Activated CD4-positive, alpha-beta memory T cell treated with anti-CD3 and anti-CD28 coated beads for 36 hours (primary cell): ENCODE measurements at regions of chr17 and their contacts with region 1.

Region 1: GRCh38 chr17:39621523-39622379 is 5.0 kb upstream of the PPP1R1B start:
- DNase-seq: peak; percentile 92
- H3K4me3 Mint-ChIP-seq: peak overlapping the region; percentile 76
- H3K27ac Mint-ChIP-seq: peak overlapping the region; percentile 97
- H3K4me1 Mint-ChIP-seq: peaks cover 23% of the 10 kb centered on the region
- H3K27me3 Mint-ChIP-seq: peaks cover 20% of the 10 kb centered on the region

Region 2: GRCh38 chr17:39547713-39548478 is 73.9 kb before region 1 on chr17:
- CTCF ChIA-PET with region 1: interaction called, 97 read pairs
- POLR2A ChIA-PET with region 1: no interaction called
- intact Hi-C with region 1: loop called (anchors 1 kb)
- DNase-seq: peak; percentile 83
- H3K4me3 Mint-ChIP-seq: no peak overlapping the region
- H3K27ac Mint-ChIP-seq: no peak overlapping the region
- H3K4me1 Mint-ChIP-seq: no peaks in the 10 kb centered on the region
- H3K27me3 Mint-ChIP-seq: no peaks in the 10 kb centered on the region

Region 3: DNA sequence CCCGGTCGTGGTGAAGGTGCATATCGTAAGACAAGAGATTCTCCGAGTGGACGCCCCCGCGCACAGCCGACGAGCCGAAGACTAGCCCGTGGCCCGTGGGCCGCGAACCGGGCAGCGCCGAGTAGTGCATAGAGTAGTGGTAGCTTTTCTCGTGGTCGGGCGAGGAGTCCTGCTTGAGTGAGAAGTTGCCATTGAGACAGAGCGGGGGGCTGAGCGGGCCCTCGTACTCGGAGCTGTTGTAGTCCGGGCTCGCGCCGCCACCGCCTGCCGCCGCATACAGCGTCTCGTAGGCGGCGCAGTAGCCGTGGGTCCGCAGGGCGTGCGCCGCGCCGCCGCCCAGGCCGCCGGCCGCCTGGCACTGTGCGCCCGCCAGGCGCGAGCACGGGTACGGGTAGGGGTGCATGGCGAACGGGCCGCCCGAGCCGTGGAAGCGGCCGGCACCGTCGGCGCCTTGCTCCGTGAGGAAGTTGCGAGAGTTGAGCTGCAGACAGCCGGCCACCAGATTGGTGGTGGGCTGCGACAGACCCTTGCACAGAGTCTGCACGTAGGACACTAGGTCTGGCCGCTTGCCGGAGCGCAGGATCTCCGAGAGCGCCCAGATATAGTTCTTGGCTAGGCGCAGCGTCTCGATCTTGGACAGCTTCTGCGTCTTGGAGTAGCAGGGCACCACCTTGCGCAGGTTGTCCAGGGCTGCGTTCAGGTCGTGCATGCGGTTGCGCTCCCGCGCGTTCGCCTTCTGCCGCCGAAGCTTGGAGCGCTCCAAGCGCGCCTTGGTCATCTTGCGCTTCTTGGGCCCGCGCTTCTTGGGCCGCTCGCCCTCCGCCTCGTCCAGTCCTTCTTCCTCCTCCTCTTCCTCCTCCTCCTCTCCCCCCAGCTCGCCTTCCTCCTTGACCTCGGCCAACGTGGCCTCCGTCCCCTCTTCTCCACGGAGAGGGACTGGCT is 16.0 kb before region 1 on chr17:
- CTCF ChIA-PET with region 1: interaction called, 56 read pairs
- POLR2A ChIA-PET with region 1: interaction called, 4 read pairs
- intact Hi-C with region 1: no loop called
- DNase-seq: no peak
- H3K4me3 Mint-ChIP-seq: no peak overlapping the region
- H3K27ac Mint-ChIP-seq: no peak overlapping the region
- H3K4me1 Mint-ChIP-seq: peaks cover 17% of the 10 kb centered on the region
- H3K27me3 Mint-ChIP-seq: peaks cover 67% of the 10 kb centered on the region

Region 4: DNA sequence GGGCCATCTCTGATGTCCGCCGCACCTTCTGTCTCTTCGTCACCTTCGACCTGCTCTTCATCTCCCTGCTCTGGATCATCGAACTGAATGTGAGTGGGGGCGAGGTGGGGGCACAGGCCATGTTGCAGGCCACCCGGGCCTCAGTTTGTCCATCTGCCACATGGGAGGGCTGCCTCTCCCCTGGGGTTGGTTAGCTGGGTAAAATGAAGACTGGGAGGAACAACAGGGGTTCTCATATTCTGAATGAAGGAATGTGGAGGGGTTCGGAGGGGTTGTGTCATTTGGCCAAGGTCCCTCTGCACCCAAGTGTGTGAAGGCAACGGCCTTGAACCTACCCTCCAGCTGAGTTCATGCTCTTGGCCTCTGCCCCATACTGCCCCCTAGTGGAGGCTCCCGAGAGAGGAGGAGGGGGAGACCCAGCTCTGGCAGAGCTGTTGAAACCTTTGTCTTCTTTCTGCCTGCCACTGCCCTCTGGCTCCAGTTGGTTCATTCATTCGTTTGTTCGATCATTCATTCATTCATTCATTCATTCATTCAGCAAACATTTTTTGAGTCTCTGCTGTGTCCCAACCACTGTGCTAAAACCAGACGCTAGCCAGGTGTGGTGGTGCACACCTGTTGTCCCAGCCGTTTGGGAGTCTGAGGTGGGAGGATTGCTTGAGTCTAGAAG is 32.0 kb after region 1 on chr17:
- CTCF ChIA-PET with region 1: interaction called, 117 read pairs
- POLR2A ChIA-PET with region 1: interaction called, 3 read pairs
- intact Hi-C with region 1: no loop called
- DNase-seq: peak; percentile 88
- H3K4me3 Mint-ChIP-seq: no peak overlapping the region
- H3K27ac Mint-ChIP-seq: no peak overlapping the region
- H3K4me1 Mint-ChIP-seq: peaks cover 7% of the 10 kb centered on the region
- H3K27me3 Mint-ChIP-seq: no peaks in the 10 kb centered on the region

Region 5: DNA sequence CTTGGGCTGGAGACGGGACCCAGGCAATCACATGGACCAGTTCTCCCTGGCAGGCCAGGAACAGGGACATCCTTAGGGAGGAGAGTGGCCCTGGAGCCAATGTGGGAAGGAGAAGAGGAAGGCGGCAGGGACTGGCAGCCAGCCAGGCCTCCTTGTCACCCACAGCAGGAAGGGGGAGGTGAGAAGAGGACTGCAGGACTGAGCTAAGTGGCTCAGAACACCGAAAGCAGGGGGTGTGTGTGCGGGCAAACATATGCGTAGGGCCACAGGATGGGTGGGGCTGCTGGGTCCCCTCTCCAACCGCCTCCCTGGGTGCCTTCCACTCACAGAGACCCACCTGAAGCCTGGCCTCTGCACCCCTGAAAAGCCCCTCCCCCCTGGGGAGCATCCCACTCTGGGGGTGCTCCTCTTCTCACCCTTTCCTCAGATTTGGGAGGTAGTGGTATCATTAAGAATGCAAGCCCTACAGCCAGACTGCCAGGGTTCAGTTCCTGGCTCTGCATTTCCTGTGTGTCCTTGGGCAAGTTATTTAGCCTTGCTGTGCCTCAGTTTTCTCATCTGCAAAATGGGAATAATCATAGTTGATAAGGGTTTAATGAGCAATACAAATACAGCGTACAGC is 54.6 kb after region 1 on chr17:
- CTCF ChIA-PET with region 1: interaction called, 57 read pairs
- POLR2A ChIA-PET with region 1: no interaction called
- intact Hi-C with region 1: no loop called
- DNase-seq: peak; percentile 67
- H3K4me3 Mint-ChIP-seq: no peak overlapping the region
- H3K27ac Mint-ChIP-seq: peak overlapping the region; percentile 19
- H3K4me1 Mint-ChIP-seq: peaks cover 61% of the 10 kb centered on the region
- H3K27me3 Mint-ChIP-seq: peaks cover 2% of the 10 kb centered on the region

Region 6: GRCh38 chr17:39730095-39730921 is 108.6 kb after region 1 on chr17 and contains the start of gene MIEN1:
- CTCF ChIA-PET with region 1: interaction called, 51 read pairs
- POLR2A ChIA-PET with region 1: no interaction called
- intact Hi-C with region 1: loop called (anchors 5 kb)
- DNase-seq: peak; percentile 95
- H3K4me3 Mint-ChIP-seq: peak within 1 kb of the TSS; percentile 88
- H3K27ac Mint-ChIP-seq: peak within 1 kb of the TSS; percentile 73
- H3K4me1 Mint-ChIP-seq: peaks cover 12% of the 10 kb centered on the region
- H3K27me3 Mint-ChIP-seq: no peaks in the 10 kb centered on the region
- total RNA-seq, gene MIEN1: 41.0 to 43.8 TPM

Region 7: GRCh38 chr17:39980351-39981206 is 358.8 kb after region 1 on chr17 and contains the start of gene PSMD3:
- CTCF ChIA-PET with region 1: interaction called, 21 read pairs
- POLR2A ChIA-PET with region 1: interaction called, 5 read pairs
- intact Hi-C with region 1: loop called (anchors 2 kb)
- DNase-seq: peak; percentile 99
- H3K4me3 Mint-ChIP-seq: peak within 1 kb of the TSS; percentile 95
- H3K27ac Mint-ChIP-seq: peak within 1 kb of the TSS; percentile 88
- H3K4me1 Mint-ChIP-seq: peaks cover 30% of the 10 kb centered on the region
- H3K27me3 Mint-ChIP-seq: peaks cover 6% of the 10 kb centered on the region
- total RNA-seq, gene PSMD3: 120 to 124 TPM